Activated T-helper 2 cell treated with anti-CD3 and anti-CD28 coated beads, Interferon-gamma antibody, Interleukin-2, Interleukin-4, amounts not matched to agents 10 μg/mL and 5 μg/mL and 100 μg/mL, durations not matched to agents 14 hours and 24 hours and 36 hours (primary cell): ENCODE measurements at regions of chr20 and their contacts with region 1.

Region 1: DNA sequence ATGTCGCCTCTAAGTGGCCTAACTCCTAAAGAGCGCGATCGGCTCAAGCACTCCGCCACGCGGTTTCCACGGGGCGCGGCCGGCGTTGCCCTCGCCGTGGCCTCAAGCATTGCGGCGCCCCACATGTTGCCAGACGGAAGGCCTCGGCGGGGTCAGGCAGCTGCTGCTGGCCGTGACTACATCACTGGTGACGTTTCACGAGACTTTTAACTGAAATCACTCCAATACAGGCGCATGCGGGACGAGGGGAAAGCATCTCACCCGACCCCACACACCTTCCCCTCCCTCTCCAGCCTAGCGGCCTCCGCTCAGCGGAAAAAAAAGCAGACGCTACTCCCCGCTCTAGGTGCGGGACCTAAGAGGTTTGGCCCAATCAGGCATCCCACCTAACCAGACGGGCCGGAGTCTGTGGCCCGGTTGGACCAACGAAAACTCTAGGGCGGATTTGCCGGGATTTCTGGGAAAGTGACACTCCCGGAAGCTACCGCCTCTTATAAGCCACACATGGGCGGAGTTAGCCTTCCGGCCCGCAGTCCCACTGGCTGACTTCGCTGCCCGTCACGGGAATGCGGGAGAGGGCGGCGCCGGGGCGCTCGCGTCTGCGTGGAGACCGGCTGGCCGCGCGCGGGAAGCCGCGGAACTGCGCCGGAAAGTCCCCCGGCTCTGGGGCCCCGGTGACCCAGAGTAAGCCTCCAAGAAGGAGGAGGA is at the start of gene NXT1:
- DNase-seq: peak; percentile 95
- H3K4me3 Mint-ChIP-seq: peak within 1 kb of the TSS; percentile 96
- H3K27ac Mint-ChIP-seq: peak within 1 kb of the TSS; percentile 100
- H3K4me1 Mint-ChIP-seq: peaks cover 17% of the 10 kb centered on the region
- H3K27me3 Mint-ChIP-seq: no peaks in the 10 kb centered on the region
- total RNA-seq, gene NXT1: 49.7 and 55.7 TPM in 2 replicates

Region 2: DNA sequence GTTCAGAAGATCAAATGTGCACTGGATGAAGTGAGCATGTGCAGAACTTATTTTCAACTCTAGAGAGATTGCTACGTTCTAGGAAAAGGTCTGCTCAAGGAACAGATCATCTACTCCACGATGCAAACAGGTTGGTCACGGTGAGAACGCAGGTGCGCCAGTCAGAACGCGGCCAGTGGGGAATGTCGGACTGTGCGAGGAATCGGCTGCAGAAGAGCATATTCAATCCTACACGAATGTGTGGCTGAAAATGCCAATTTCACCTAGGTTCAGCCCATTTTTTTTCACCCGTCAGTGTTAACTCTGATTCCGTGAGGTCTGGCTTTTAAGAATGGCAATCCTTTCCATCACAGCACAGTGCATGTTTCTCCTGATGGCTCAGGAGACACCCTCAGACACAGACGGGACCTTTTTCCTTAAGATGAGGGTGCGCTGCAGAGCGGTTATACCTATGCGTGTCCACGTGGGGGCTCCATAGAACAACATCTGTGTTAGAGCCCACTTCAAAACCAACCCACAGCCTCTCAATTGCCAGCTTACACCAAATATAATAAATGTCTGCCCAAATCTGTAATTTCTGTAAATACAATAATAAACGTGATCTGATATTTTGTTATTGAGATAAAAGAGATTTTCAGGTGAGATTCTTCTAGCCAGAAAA is 1016.3 kb before region 1 on chr20:
- intact Hi-C with region 1: loop called (anchors 10 kb)
- DNase-seq: peak; percentile 14
- H3K4me3 Mint-ChIP-seq: no peak overlapping the region
- H3K27ac Mint-ChIP-seq: no peak overlapping the region
- H3K4me1 Mint-ChIP-seq: no peaks in the 10 kb centered on the region
- H3K27me3 Mint-ChIP-seq: no peaks in the 10 kb centered on the region

Region 3: DNA sequence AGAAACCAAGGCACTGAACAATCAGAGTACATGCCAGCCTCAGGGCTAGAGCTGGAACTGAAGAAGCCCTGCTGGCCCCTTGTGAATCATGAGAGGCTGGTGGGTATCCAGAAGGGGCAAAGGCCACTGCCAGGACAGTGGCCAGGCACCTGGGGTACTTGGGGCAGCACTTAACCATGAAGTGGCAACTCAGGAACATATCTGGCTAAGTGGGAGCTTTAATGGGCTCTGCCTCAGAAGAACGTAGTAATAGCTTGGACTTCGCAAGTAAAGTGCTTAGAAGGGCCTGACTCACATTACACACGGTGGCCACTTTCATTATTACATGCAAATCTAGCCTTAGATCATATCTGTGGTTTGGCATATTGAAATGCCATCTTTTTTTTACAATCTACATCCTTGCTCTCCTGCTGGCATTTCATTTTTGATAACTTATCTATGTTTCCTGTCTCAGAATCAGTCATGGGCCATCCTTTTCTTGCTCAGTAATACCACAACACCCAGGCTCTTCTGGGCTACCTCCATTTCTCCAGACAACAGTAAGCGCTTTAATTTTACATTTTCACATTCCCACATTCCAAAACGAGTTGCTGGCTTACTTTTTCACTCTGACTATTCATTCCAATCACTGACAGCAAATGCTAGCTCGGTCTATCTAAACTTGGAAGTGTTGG is 49.4 kb after region 1 on chr20:
- intact Hi-C with region 1: loop called (anchors 1 kb)
- DNase-seq: peak; percentile 15
- H3K4me3 Mint-ChIP-seq: no peak overlapping the region
- H3K27ac Mint-ChIP-seq: peak overlapping the region; percentile 63
- H3K4me1 Mint-ChIP-seq: peaks cover 57% of the 10 kb centered on the region
- H3K27me3 Mint-ChIP-seq: no peaks in the 10 kb centered on the region

Region 4: DNA sequence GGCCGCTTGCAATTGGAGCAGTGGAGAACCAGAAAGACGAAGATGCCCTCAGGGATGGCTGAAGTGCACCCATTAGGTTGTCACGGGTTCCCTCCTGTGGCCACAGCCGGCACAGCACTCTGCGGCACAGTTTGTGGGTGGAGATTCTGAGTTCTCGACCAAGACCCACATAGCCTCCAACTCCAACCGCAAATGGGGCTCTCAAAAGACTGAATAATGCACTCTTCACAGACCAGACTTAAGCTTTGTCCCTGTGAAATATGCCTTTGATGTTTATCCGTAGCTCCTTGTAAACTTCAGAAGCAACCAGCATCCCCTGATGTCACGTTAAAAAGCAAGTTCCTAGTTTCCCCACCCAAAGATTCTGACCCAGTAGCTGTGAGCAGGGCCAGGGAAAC is 256.3 kb after region 1 on chr20:
- intact Hi-C with region 1: loop called (anchors 2 kb)
- DNase-seq: peak; percentile 34
- H3K4me3 Mint-ChIP-seq: no peak overlapping the region
- H3K27ac Mint-ChIP-seq: no peak overlapping the region
- H3K4me1 Mint-ChIP-seq: peaks cover 4% of the 10 kb centered on the region
- H3K27me3 Mint-ChIP-seq: peaks cover 3% of the 10 kb centered on the region

Region 5: DNA sequence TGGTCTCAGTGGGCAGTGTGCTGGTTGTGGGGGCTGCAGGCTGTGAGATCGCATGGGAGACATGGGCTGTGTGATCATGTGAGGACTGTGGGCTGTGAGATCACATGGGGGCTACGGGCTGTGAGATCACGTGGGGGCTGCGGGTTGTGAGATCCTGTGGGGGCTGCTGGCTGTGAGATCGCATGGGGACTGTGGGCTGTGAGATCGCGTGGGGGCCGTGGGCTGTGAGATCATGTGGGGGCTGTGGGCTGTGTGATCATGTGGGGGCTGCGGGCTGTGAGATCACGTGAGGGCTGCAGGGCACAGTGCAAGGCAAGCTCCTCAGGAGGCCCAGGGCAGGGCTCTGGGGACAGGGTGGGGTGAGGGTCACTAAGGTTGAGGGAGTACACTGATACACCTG is 1458.3 kb after region 1 on chr20:
- intact Hi-C with region 1: no loop called
- DNase-seq: no peak
- H3K4me3 Mint-ChIP-seq: no peak overlapping the region
- H3K27ac Mint-ChIP-seq: no peak overlapping the region
- H3K4me1 Mint-ChIP-seq: no peaks in the 10 kb centered on the region
- H3K27me3 Mint-ChIP-seq: no peaks in the 10 kb centered on the region